ENCODE measurements at regions of chr6 and their contacts with region 1.

Region 1: DNA sequence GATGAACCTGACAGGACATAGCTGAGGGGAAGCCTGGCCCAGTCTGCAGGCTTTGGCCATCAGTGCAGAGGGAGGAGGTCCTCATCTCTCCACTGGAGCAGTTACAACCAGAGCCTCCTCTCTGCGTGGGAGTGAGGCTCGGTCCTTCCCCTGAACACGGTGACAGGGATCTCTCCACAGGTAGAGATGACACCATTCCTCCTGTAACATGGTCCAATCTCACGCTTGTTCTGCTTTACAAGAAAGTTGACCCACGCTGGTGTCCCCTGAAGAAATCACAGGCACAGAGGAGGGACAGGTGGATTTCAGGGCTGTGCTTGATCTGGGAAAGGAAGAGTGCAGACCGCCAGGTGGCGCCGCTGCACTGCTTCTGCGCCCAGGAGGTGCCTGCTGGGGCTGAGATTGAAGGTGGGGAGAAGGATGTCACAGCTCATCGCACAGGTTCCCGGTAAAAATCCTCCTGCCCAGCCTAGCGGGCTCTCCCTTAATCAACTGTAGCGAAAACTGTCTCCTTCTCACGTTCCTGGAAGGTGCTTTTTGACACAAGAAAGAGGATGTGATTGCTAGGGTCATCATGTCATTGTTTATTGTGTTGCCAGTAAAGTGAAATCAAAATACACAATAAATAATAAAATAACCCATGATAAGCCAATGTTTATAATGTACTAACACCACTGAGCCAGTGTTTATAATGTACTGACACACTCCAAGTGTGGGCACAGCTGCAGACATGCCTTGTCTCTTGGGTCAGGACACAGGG is 20.4 kb downstream of the HLA-G start:
- DNase-seq: peak; percentile 87
- ATAC-seq: peak; percentile 93

Region 2: GRCh38 chr6:30006170-30007131 is 158.4 kb after region 1 on chr6:
- intact Hi-C with region 1: loop called (anchors 5 kb)
- DNase-seq: peak; percentile 65
- ATAC-seq: peak; percentile 83

Region 3: DNA sequence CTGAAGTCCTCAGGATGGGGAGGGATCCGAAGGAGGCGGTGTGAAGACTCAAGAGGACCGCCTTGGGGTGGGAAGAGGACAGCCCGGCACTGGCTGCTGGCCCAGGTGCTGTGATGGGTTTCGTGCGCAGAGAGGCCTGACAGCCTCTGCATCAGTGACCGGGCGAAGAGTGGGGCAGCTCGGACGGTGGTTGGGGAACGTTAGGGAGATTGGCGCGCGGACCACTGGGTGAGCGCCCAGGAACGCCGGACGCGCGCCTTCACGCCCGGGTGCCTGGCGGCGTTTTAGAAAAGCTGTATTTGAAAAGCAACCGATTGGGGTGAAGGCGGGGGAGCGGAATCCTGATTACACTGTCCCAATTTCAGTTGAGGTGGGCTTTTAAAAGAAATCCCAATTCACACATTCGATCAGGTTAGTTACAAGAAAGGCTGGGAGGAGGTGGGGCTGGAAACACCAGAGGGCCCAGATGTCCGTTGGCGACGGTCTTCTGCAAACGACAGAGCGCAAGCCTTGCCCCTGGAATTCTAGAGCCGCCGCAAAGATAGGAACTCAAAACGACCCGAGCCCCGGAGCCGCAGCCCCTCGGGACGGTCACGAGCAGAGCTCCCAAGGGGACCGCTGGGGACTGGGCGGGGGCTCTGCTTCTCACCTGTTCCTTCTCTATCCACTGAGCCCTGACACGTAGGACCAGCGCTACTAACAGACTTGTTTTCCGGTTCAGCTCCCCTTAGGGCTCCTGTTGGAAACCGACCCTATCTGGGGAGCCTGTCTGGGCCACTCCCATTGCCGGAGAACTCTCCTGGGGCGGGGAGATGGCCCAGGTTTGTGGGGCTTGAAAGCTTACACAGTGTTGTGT is 279.4 kb after region 1 on chr6:
- intact Hi-C with region 1: loop called (anchors 10 kb)
- DNase-seq: no peak
- ATAC-seq: peak; percentile 22